ENCODE measurements at regions of chr18 and their contacts with region 1.

Region 1: GRCh38 chr18:77132371-77133050 is at the start of gene MBP:
- DNase-seq: peak; percentile 57 to 84 (median 76)
- ATAC-seq: peak; percentile 64
- H3K4me3 ChIP-seq: peak within 1 kb of the TSS; percentile 93
- H3K4me3 Mint-ChIP-seq: peak within 1 kb of the TSS; percentile 98
- H3K27ac ChIP-seq: peak within 1 kb of the TSS; percentile 77 to 78
- H3K27ac Mint-ChIP-seq: peak within 1 kb of the TSS; percentile 83
- H3K4me1 ChIP-seq: peaks cover 44% of the 10 kb centered on the region
- H3K4me1 Mint-ChIP-seq: peaks cover 56% of the 10 kb centered on the region
- H3K27me3 ChIP-seq: no peaks in the 10 kb centered on the region
- H3K27me3 Mint-ChIP-seq: no peaks in the 10 kb centered on the region
- CTCF ChIP-seq: no peak
- total RNA-seq, gene MBP: 75.4 to 79.2 TPM

Region 2: GRCh38 chr18:76805221-76805620 is 327.3 kb before region 1 on chr18:
- CTCF ChIA-PET with region 1: no interaction called
- POLR2A ChIA-PET with region 1: no interaction called
- intact Hi-C with region 1: no loop called
- DNase-seq: no peak
- ATAC-seq: no peak
- H3K4me3 ChIP-seq: no peak overlapping the region
- H3K4me3 Mint-ChIP-seq: no peak overlapping the region
- H3K27ac ChIP-seq: no peak overlapping the region
- H3K27ac Mint-ChIP-seq: no peak overlapping the region
- H3K4me1 ChIP-seq: peaks cover 18% of the 10 kb centered on the region
- H3K4me1 Mint-ChIP-seq: peaks cover 15% of the 10 kb centered on the region
- H3K27me3 ChIP-seq: peaks cover 0 to 10% of the 10 kb centered on the region in 2 experiments
- H3K27me3 Mint-ChIP-seq: peaks cover 7% of the 10 kb centered on the region
- CTCF ChIP-seq: no peak

Region 3: GRCh38 chr18:77000527-77000926 is 132.0 kb before region 1 on chr18:
- CTCF ChIA-PET with region 1: no interaction called
- POLR2A ChIA-PET with region 1: interaction called, 5 read pairs
- intact Hi-C with region 1: loop called in 1 of 2 experiments (anchors 5 kb)
- DNase-seq: peak in 13 of 14 experiments; percentile 34 to 78 (median 48)
- ATAC-seq: peak; percentile 56
- H3K4me3 ChIP-seq: no peak overlapping the region
- H3K4me3 Mint-ChIP-seq: no peak overlapping the region
- H3K27ac ChIP-seq: no peak overlapping the region
- H3K27ac Mint-ChIP-seq: no peak overlapping the region
- H3K4me1 ChIP-seq: peaks cover 17% of the 10 kb centered on the region
- H3K4me1 Mint-ChIP-seq: peaks cover 26% of the 10 kb centered on the region
- H3K27me3 ChIP-seq: no peaks in the 10 kb centered on the region
- H3K27me3 Mint-ChIP-seq: no peaks in the 10 kb centered on the region
- CTCF ChIP-seq: peak; percentile 99

Region 4: GRCh38 chr18:77061946-77062517 is 70.5 kb before region 1 on chr18:
- CTCF ChIA-PET with region 1: interaction called, 6 read pairs
- POLR2A ChIA-PET with region 1: interaction called, 41 read pairs
- intact Hi-C with region 1: loop called (anchors 2 to 5 kb)
- DNase-seq: peak in 7 of 14 experiments; percentile 24 to 74 (median 52)
- ATAC-seq: peak; percentile 9
- H3K4me3 ChIP-seq: peak overlapping the region; percentile 28
- H3K4me3 Mint-ChIP-seq: peak overlapping the region; percentile 55
- H3K27ac ChIP-seq: peak overlapping the region; percentile 89 to 93
- H3K27ac Mint-ChIP-seq: peak overlapping the region; percentile 98
- H3K4me1 ChIP-seq: peaks cover 91% of the 10 kb centered on the region
- H3K4me1 Mint-ChIP-seq: peaks cover 82% of the 10 kb centered on the region
- H3K27me3 ChIP-seq: no peaks in the 10 kb centered on the region
- H3K27me3 Mint-ChIP-seq: no peaks in the 10 kb centered on the region
- CTCF ChIP-seq: no peak

Region 5: DNA sequence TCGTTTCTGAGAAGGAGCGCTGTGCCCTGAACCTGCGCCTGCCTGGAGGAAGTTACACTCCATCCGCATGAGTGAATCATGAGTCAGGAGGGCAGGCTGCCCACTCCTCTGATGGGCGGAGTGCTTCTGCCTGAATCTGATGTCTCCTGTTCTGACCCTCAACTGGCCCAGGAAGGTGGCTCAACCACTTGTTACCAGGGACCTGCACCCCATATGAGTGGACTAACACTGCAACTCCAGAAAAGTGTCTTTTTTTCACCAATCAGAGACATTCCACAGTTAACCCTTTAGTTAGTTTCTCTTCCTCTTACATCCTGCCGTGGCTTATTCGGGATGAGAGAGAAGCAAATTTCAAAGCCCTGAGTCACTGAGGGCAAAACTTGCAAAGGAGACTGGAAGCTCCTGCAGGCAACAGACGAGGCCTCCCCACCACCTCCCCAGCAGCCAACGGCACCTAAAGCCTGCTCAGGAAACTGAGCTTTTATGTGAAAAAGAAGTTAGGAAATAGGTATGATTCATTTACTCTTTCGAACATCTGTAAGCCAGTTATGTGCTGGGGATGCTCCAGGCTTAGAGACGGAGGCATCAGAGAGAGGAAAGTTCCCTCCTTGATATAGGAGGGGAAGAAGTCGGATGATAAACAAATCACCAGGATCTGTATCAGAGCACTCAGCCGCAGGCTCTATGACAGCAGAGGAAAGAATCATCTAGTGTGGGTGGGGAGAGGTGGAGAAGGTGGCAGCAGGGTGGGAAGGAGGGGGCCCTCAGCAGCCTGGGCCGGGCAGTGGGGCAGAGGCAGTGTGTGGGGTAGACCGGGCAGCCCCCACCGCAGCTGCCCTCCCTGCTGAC is 30.9 kb before region 1 on chr18:
- CTCF ChIA-PET with region 1: no interaction called
- POLR2A ChIA-PET with region 1: interaction called, 42 read pairs
- intact Hi-C with region 1: loop called in 1 of 2 experiments (anchors 1 kb)
- DNase-seq: peak in 6 of 14 experiments; percentile 29 to 77 (median 64)
- ATAC-seq: peak; percentile 15
- H3K4me3 ChIP-seq: peak overlapping the region; percentile 25
- H3K4me3 Mint-ChIP-seq: peak overlapping the region; percentile 77
- H3K27ac ChIP-seq: peak overlapping the region; percentile 74 to 89
- H3K27ac Mint-ChIP-seq: peak overlapping the region; percentile 97
- H3K4me1 ChIP-seq: peaks cover 95% of the 10 kb centered on the region
- H3K4me1 Mint-ChIP-seq: peaks cover 96% of the 10 kb centered on the region
- H3K27me3 ChIP-seq: no peaks in the 10 kb centered on the region
- H3K27me3 Mint-ChIP-seq: no peaks in the 10 kb centered on the region
- CTCF ChIP-seq: no peak

Region 6: DNA sequence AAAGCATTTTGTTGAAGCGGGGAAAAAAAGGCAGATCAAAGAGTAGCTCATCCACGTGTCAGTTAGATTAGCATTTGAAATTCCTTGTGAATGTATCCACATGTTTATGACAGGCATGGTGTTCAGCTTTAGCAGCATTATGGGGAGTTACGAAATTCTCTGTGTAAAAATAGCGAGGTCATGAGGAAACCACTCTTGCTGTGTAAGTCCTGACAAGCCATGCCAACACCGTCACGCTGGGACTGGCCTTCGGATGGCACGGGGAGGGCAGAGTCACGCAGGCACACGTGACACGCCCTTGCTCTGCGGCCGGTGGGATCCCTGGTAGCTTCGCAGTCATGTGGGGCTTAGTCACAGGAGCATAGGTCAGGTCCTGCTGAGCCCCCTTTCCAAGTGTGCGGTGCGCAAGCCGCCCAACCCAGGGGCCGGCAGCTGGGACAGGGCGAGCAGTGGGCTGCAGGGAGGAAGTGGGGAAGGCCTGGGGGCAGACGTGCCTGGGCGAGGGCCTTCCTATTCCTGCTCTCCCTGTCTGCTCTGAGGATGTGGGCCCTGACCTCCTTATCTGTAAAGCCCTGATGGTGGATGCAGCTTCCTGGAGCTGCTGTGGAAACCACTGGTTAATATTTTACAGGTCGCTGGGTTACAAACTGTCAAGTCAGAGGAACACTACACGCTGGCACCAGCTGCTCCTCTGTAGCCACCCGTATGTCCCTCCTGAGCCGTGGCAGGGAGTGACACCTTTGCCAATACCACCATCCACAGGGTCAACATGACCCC is 17.9 kb before region 1 on chr18:
- CTCF ChIA-PET with region 1: no interaction called
- POLR2A ChIA-PET with region 1: interaction called, 8 read pairs
- intact Hi-C with region 1: loop called in 1 of 2 experiments (anchors 2 kb)
- DNase-seq: peak in 5 of 14 experiments; percentile 36 to 86 (median 39)
- ATAC-seq: peak; percentile 27
- H3K4me3 ChIP-seq: no peak overlapping the region
- H3K4me3 Mint-ChIP-seq: peak overlapping the region; percentile 68
- H3K27ac ChIP-seq: peak overlapping the region; percentile 54 to 69
- H3K27ac Mint-ChIP-seq: peak overlapping the region; percentile 97
- H3K4me1 ChIP-seq: peaks cover 79% of the 10 kb centered on the region
- H3K4me1 Mint-ChIP-seq: peaks cover 87% of the 10 kb centered on the region
- H3K27me3 ChIP-seq: no peaks in the 10 kb centered on the region
- H3K27me3 Mint-ChIP-seq: no peaks in the 10 kb centered on the region
- CTCF ChIP-seq: no peak

Region 7: DNA sequence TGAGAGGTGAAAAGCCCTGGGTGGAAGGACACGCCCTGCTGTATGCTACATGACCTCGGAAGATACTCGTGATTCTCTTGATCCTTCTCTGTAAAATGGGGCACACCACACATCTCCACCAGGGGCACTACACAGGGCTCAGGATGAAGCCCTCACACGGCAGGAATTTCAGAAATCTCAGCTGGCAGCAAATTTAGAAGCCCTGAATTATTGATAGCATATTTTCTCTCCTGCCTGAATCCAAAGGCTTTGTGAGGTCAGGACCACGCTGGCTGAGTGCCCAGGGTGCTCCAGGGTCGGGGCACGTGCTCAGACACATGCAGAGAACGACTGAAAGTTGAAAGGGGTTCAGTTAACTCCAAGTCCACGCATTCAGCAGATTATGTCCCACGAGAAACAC is 75.0 kb after region 1 on chr18:
- CTCF ChIA-PET with region 1: no interaction called
- POLR2A ChIA-PET with region 1: interaction called, 4 read pairs
- intact Hi-C with region 1: loop called (anchors 5 kb)
- DNase-seq: peak; percentile 19 to 84 (median 54)
- ATAC-seq: peak; percentile 97
- H3K4me3 ChIP-seq: no peak overlapping the region
- H3K4me3 Mint-ChIP-seq: peak overlapping the region; percentile 92
- H3K27ac ChIP-seq: no peak overlapping the region
- H3K27ac Mint-ChIP-seq: peak overlapping the region; percentile 78
- H3K4me1 ChIP-seq: peaks cover 33% of the 10 kb centered on the region
- H3K4me1 Mint-ChIP-seq: peaks cover 51% of the 10 kb centered on the region
- H3K27me3 ChIP-seq: no peaks in the 10 kb centered on the region
- H3K27me3 Mint-ChIP-seq: no peaks in the 10 kb centered on the region
- CTCF ChIP-seq: peak; percentile 76